GM12878 (cell line): ENCODE measurements at regions of chr15 and their contacts with region 1.

Region 1: DNA sequence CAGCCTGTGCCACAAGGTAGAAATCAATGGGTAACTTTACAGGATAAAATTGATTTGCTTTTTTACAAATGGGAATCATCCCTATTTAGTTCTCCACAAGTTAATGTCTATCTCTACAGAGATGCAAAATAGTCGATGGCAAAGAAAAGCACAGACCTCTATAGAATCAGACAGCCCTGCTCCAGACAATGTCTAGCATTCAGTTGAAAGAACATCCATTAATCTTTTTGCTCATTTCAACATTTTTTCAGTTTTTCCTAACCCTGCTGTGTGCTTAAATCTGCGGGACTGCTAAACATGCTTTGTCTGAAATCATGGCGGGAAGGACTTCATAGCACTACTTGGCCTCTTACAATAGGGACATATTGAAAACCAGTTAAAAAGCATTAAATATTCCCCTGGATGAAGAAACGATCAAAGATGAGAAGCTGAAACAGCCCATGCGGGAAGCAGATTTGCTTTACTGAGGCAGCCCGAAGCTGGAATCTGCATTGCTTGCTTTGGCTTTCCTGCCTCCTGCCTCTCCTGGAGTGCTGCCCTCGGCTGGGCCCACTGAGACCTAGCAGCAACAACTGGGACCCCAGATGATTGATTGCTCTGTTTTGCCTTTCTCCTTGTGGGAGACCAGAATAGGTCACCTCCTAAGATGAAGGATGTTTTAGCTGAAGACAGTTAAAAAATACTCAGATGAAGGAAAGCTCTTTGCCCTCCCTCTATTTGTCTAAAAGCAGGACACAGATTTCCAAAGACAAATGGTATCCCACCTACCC is 38.5 kb upstream of the RASGRP1 start:
- DNase-seq: no peak
- ATAC-seq: peak; percentile 22; the same call in 2 of the 3 replicates
- H3K4me3 ChIP-seq: no peak overlapping the region
- H3K27ac ChIP-seq: no peak overlapping the region
- H3K4me1 ChIP-seq: no peaks in the 10 kb centered on the region; the same call in 1 of the 2 replicates
- H3K27me3 ChIP-seq: peaks cover 0 to 3% of the 10 kb centered on the region in 2 experiments; a peak in 1 of 4 replicates
- CTCF ChIP-seq: no peak
- EP300 ChIP-seq: no peak
- POLR2A ChIP-seq: no peak
- RAD21 ChIP-seq: no peak

Region 2: GRCh38 chr15:38536201-38536676 is 66.8 kb before region 1 on chr15:
- CTCF ChIA-PET with region 1: no interaction called
- POLR2A ChIA-PET with region 1: no interaction called
- RAD21 ChIA-PET with region 1: no interaction called
- SMC1A ChIA-PET with region 1: no interaction called
- in situ Hi-C with region 1: no loop called
- intact Hi-C with region 1: no loop called
- DNase-seq: no peak
- ATAC-seq: no peak
- H3K4me3 ChIP-seq: no peak overlapping the region
- H3K27ac ChIP-seq: no peak overlapping the region
- H3K4me1 ChIP-seq: no peaks in the 10 kb centered on the region
- H3K27me3 ChIP-seq: no peaks in the 10 kb centered on the region
- CTCF ChIP-seq: no peak
- EP300 ChIP-seq: no peak
- POLR2A ChIP-seq: no peak
- RAD21 ChIP-seq: no peak

Region 3: DNA sequence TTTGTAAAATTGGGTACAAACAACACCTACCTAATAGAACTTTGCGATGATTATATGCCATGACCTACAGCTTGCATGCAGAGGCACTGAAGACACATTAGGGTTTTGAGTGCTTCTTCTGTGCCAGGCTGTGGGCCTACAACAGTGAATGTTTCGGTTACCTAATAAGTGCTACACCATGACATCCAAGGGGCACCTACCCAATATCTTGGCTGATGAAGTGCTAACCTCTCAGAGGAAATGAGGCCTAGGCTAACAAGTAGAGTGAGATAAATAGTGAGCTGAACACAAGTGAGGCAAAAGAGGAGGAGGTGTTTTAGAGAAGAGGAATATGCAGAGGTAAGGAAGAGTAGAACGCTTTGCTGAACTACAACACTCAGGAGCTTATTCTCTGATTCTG is 26.2 kb before region 1 on chr15:
- CTCF ChIA-PET with region 1: interaction called, 5 read pairs
- POLR2A ChIA-PET with region 1: interaction called, 6 read pairs
- RAD21 ChIA-PET with region 1: interaction called, 5 read pairs
- SMC1A ChIA-PET with region 1: interaction called, 10 read pairs
- in situ Hi-C with region 1: no loop called
- intact Hi-C with region 1: no loop called
- DNase-seq: no peak
- ATAC-seq: no peak
- H3K4me3 ChIP-seq: no peak overlapping the region
- H3K27ac ChIP-seq: no peak overlapping the region
- H3K4me1 ChIP-seq: no peaks in the 10 kb centered on the region
- H3K27me3 ChIP-seq: no peaks in the 10 kb centered on the region
- CTCF ChIP-seq: no peak
- EP300 ChIP-seq: no peak
- POLR2A ChIP-seq: no peak
- RAD21 ChIP-seq: no peak

Region 4: GRCh38 chr15:38589502-38589901 is 13.6 kb before region 1 on chr15:
- CTCF ChIA-PET with region 1: interaction called, 22 read pairs
- POLR2A ChIA-PET with region 1: interaction called, 6 read pairs
- RAD21 ChIA-PET with region 1: interaction called, 4 read pairs
- SMC1A ChIA-PET with region 1: interaction called, 36 read pairs
- in situ Hi-C with region 1: no loop called
- intact Hi-C with region 1: no loop called
- DNase-seq: no peak
- ATAC-seq: no peak
- H3K4me3 ChIP-seq: no peak overlapping the region
- H3K27ac ChIP-seq: no peak overlapping the region
- H3K4me1 ChIP-seq: no peaks in the 10 kb centered on the region
- H3K27me3 ChIP-seq: no peaks in the 10 kb centered on the region
- CTCF ChIP-seq: no peak
- EP300 ChIP-seq: no peak
- POLR2A ChIP-seq: no peak
- RAD21 ChIP-seq: no peak